ENCODE measurements at regions of chr3 and their contacts with region 1.

Region 1: DNA sequence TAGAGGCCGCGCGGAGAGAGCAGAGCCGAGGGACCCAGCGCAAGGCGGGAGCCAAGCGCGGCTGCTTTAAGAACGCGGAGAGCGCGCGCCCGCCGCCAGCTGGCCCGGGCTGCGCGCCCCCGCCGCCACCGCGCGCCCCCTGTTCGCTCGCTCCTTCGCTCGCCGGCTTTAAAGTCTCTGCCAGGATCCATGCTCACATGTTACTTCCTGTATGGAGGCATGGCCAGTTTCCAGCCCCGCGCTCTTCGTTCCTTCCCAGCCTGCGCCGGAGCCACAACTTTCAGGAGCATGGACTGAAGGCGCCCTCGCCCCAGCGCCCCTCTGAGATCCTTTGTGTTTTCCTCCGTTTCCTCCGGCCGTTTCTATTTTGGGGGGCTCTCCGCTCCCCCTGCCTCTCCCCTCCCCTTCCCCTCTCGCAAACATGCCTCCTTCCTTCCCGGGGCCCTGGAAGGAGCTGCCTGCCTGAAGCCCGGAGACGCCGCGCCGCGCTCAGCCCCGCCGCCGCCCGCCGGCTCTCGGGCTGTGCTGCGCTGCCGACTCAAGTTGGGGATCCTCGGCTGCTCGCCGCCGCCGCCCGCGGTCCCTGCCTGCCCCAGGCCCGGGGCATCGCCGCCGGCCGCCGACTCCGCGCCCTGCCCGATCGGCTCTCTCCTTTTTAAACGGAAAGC is at the start of gene PTPRG:
- DNase-seq: peak; percentile 61 to 83
- H3K4me3 ChIP-seq: peak within 1 kb of the TSS; percentile 58 to 98 (median 87)
- H3K27ac ChIP-seq: peak within 1 kb of the TSS; percentile 92
- H3K4me1 ChIP-seq: peaks cover 3 to 13% (median 10%) of the 10 kb centered on the region in 4 experiments
- H3K27me3 ChIP-seq: no peaks in the 10 kb centered on the region; a peak in 1 of 7 replicates
- CTCF ChIP-seq: no peak
- EP300 ChIP-seq: no peak
- POLR2A ChIP-seq: peak; percentile 83 to 95
- RAD21 ChIP-seq: no peak
- total RNA-seq, gene PTPRG: 90.1 and 96.2 TPM in 2 replicates

Region 2: GRCh38 chr3:61417352-61417751 is 144.2 kb before region 1 on chr3:
- CTCF ChIA-PET with region 1: no interaction called
- POLR2A ChIA-PET with region 1: no interaction called
- DNase-seq: no peak
- H3K4me3 ChIP-seq: no peak overlapping the region
- H3K27ac ChIP-seq: no peak overlapping the region
- H3K4me1 ChIP-seq: no peaks in the 10 kb centered on the region
- H3K27me3 ChIP-seq: no peaks in the 10 kb centered on the region
- CTCF ChIP-seq: no peak
- EP300 ChIP-seq: no peak
- POLR2A ChIP-seq: no peak
- RAD21 ChIP-seq: no peak

Region 3: DNA sequence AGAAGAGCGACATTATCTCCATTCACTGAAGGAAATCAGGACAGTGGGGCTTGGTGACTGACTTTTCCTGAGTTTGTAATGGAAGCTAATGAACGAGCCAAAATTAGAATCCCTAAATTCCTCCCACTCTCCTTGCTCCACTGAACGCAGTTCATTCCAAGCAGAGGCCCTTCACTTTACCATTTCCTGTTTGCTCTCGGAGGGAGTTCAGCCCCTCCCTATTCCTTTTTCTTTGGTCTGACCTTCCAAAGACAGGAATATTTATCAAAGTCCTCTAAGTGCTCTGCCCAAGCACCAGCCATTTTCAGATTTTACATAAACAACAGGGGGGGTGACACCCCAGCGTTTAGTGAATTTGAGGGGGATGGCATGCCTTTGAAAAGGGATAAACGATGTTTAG is 24.1 kb before region 1 on chr3:
- CTCF ChIA-PET with region 1: interaction called, 4 read pairs
- POLR2A ChIA-PET with region 1: interaction called, 22 read pairs
- DNase-seq: no peak
- H3K4me3 ChIP-seq: peak overlapping the region in 2 of 4 experiments; percentile 15 to 40; a peak in 2 of 8 replicates
- H3K27ac ChIP-seq: peak overlapping the region; percentile 37; the same call in 1 of the 2 replicates
- H3K4me1 ChIP-seq: peaks cover 2 to 7% (median 3%) of the 10 kb centered on the region in 4 experiments; a peak in 6 of 7 replicates
- H3K27me3 ChIP-seq: no peaks in the 10 kb centered on the region; a peak in 1 of 7 replicates
- CTCF ChIP-seq: no peak
- EP300 ChIP-seq: no peak
- POLR2A ChIP-seq: no peak
- RAD21 ChIP-seq: no peak

Region 4: DNA sequence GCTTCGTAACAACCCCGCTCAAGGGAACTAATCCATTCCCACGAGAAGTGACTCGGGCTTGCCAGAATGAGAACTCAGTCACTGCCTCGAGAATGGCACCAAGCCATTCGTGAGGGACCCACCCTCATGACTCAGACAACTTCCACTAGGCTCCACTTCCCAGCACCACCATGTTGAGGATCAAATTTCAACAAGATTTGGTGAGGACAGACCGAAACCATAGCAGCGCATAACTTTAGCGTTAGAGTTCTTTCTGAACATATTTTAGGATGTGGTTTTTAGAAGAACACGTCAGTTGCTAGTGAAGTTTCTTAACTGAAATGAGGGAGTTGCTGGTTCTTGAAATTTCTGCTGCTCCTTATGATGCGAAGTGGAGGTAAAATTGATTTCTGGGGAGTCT is 13.3 kb after region 1 on chr3:
- CTCF ChIA-PET with region 1: interaction called, 17 read pairs
- POLR2A ChIA-PET with region 1: interaction called, 200 read pairs
- DNase-seq: peak in 1 of 2 experiments; percentile 43
- H3K4me3 ChIP-seq: no peak overlapping the region
- H3K27ac ChIP-seq: no peak overlapping the region; the same call in 1 of the 2 replicates
- H3K4me1 ChIP-seq: peaks cover 3 to 44% (median 15%) of the 10 kb centered on the region in 4 experiments; a peak in 6 of 7 replicates
- H3K27me3 ChIP-seq: no peaks in the 10 kb centered on the region
- CTCF ChIP-seq: no peak
- EP300 ChIP-seq: no peak
- POLR2A ChIP-seq: no peak
- RAD21 ChIP-seq: no peak

Region 5: DNA sequence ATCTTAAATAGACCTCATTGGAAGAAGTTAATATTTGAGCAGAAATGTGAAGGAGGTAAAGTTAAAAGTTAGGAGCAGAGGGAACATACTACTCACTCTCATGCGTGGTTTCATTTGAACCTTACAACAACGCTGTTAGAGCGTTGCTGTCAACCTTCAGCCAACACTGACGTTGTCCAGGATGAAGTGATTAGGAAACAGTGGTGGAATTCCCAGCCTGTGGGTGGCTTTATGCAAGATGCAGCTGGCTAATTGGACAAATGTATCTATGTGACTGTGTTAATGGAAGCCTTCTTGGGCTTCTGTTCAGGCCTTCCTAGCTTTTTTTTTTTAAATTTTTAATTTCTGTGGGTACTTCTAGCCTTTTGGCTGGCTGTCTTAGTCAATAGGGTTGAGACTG is 40.3 kb after region 1 on chr3:
- CTCF ChIA-PET with region 1: interaction called, 10 read pairs
- POLR2A ChIA-PET with region 1: interaction called, 11 read pairs
- DNase-seq: no peak
- H3K4me3 ChIP-seq: no peak overlapping the region
- H3K27ac ChIP-seq: no peak overlapping the region
- H3K4me1 ChIP-seq: peaks cover 0 to 16% (median 0%) of the 10 kb centered on the region in 4 experiments; a peak in 2 of 7 replicates
- H3K27me3 ChIP-seq: no peaks in the 10 kb centered on the region
- CTCF ChIP-seq: no peak
- EP300 ChIP-seq: no peak
- POLR2A ChIP-seq: no peak
- RAD21 ChIP-seq: no peak

Region 6: DNA sequence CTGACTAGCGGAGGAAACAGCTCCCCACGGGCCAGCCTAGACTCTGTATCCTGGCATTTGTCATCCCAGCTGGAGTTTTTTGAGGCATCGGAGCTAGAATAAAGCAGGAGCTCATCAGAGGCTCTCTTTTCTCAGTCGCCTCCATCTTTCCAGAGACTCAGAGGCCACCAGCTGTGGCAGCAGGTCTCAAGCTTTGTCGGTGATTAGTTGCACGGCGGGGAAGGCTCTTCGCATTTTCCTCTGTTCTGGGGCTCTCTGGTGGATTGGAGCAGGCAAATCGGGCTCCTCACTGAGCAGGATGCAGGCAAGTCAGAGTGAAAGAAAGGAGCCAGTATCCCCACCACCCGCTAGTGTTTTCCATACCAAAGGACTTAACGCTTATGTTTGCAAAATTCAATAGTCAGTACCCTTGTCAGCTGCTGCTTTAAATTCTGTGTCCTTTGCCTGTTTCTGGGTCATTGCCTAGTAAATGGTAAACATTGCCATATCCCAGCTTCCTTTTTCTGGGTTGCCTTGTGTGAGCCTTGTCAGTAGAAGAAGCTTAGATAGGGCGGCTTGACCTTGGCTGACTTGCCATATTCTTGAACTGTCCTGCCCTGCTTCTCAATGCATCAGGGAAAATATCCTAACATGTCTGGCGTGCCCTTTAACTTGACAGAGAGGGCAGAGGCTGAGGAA is 126.9 kb after region 1 on chr3:
- CTCF ChIA-PET with region 1: interaction called, 15 read pairs
- POLR2A ChIA-PET with region 1: interaction called, 22 read pairs
- DNase-seq: peak; percentile 84 to 94
- H3K4me3 ChIP-seq: peak overlapping the region in 2 of 4 experiments; percentile 6 to 19; a peak in 3 of 8 replicates
- H3K27ac ChIP-seq: no peak overlapping the region; the same call in 1 of the 2 replicates
- H3K4me1 ChIP-seq: peaks cover 23 to 66% (median 56%) of the 10 kb centered on the region in 4 experiments
- H3K27me3 ChIP-seq: peaks cover 0 to 4% (median 0%) of the 10 kb centered on the region in 4 experiments; a peak in 1 of 7 replicates
- CTCF ChIP-seq: no peak
- EP300 ChIP-seq: peak in 1 of 2 experiments; percentile 51; a peak in 1 of 3 replicates
- POLR2A ChIP-seq: no peak
- RAD21 ChIP-seq: peak; percentile 26 to 37; a peak in 3 of 4 replicates

Region 7: GRCh38 chr3:61936344-61936937 is 374.9 kb after region 1 on chr3:
- CTCF ChIA-PET with region 1: interaction called, 15 read pairs
- POLR2A ChIA-PET with region 1: interaction called, 7 read pairs
- DNase-seq: peak in 1 of 2 experiments; percentile 73
- H3K4me3 ChIP-seq: no peak overlapping the region
- H3K27ac ChIP-seq: no peak overlapping the region
- H3K4me1 ChIP-seq: peaks cover 0 to 12% (median 6%) of the 10 kb centered on the region in 4 experiments; a peak in 6 of 7 replicates
- H3K27me3 ChIP-seq: no peaks in the 10 kb centered on the region
- CTCF ChIP-seq: peak; percentile 58 to 82 (median 74)
- EP300 ChIP-seq: no peak
- POLR2A ChIP-seq: no peak
- RAD21 ChIP-seq: peak; percentile 43 to 71; a peak in 3 of 4 replicates

Measured in H1 (cell line).